Panc1 (cell line): ENCODE measurements at regions of chr3 and their contacts with region 1.

Region 1: GRCh38 chr3:74489050-74489792 is 125.2 kb downstream of the CNTN3 start:
- DNase-seq: no peak
- ATAC-seq: no peak
- H3K4me3 ChIP-seq: no peak overlapping the region
- H3K27ac ChIP-seq: no peak overlapping the region
- H3K4me1 ChIP-seq: no peaks in the 10 kb centered on the region
- H3K27me3 ChIP-seq: no peaks in the 10 kb centered on the region
- CTCF ChIP-seq: no peak

Region 2: DNA sequence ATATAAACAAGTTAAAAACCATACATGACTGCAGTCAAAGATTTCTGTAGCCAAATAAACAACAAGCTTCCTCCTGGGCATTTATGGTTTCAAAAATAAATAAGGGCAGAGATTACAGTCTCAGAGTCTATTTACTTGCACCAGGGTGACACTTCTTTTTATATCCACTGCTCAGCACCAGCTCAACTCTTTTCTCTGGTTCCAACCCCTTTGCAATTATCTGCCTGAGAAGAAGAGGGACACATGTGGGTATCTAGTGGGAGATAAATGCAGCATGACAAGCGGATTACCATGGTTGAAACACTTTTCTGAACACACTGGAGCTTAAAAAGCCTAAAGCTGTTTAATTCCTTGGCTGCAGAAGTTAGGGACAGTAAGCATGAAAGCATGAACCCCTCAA is 186.3 kb before region 1 on chr3:
- CTCF ChIA-PET with region 1: no interaction called
- POLR2A ChIA-PET with region 1: interaction called, 12 read pairs
- in situ Hi-C with region 1: no loop called
- intact Hi-C with region 1: no loop called
- DNase-seq: no peak
- ATAC-seq: no peak
- H3K4me3 ChIP-seq: no peak overlapping the region
- H3K27ac ChIP-seq: no peak overlapping the region
- H3K4me1 ChIP-seq: no peaks in the 10 kb centered on the region
- H3K27me3 ChIP-seq: no peaks in the 10 kb centered on the region
- CTCF ChIP-seq: no peak

Region 3: GRCh38 chr3:75076481-75076880 is 587.3 kb after region 1 on chr3:
- CTCF ChIA-PET with region 1: no interaction called
- POLR2A ChIA-PET with region 1: no interaction called
- in situ Hi-C with region 1: no loop called
- intact Hi-C with region 1: loop called (anchors 5 kb)
- DNase-seq: no peak
- ATAC-seq: no peak
- H3K4me3 ChIP-seq: no peak overlapping the region
- H3K27ac ChIP-seq: no peak overlapping the region
- H3K4me1 ChIP-seq: no peaks in the 10 kb centered on the region
- H3K27me3 ChIP-seq: no peaks in the 10 kb centered on the region
- CTCF ChIP-seq: no peak